ENCODE measurements at regions of chr4 and their contacts with region 1.

Region 1: GRCh38 chr4:40056716-40057585 is at the start of gene N4BP2:
- DNase-seq: peak; percentile 68
- ATAC-seq: peak; percentile 55
- H3K4me3 ChIP-seq: peak within 1 kb of the TSS; percentile 81
- H3K27ac ChIP-seq: peak within 1 kb of the TSS; percentile 88
- H3K4me1 ChIP-seq: peaks cover 17% of the 10 kb centered on the region
- H3K27me3 ChIP-seq: no peaks in the 10 kb centered on the region
- CTCF ChIP-seq: peak; percentile 52
- total RNA-seq, gene N4BP2: 3.4 and 3.9 TPM in 2 replicates

Region 2: GRCh38 chr4:39977489-39978377 is 79.2 kb before region 1 on chr4 and contains the start of gene PDS5A:
- CTCF ChIA-PET with region 1: no interaction called
- POLR2A ChIA-PET with region 1: no interaction called
- intact Hi-C with region 1: loop called (anchors 5 kb)
- DNase-seq: peak; percentile 91
- ATAC-seq: peak; percentile 78
- H3K4me3 ChIP-seq: peak within 1 kb of the TSS; percentile 96
- H3K27ac ChIP-seq: peak within 1 kb of the TSS; percentile 34
- H3K4me1 ChIP-seq: peaks cover 12% of the 10 kb centered on the region
- H3K27me3 ChIP-seq: no peaks in the 10 kb centered on the region
- CTCF ChIP-seq: peak; percentile 70
- total RNA-seq, gene PDS5A: 39.9 and 49.8 TPM in 2 replicates

Region 3: DNA sequence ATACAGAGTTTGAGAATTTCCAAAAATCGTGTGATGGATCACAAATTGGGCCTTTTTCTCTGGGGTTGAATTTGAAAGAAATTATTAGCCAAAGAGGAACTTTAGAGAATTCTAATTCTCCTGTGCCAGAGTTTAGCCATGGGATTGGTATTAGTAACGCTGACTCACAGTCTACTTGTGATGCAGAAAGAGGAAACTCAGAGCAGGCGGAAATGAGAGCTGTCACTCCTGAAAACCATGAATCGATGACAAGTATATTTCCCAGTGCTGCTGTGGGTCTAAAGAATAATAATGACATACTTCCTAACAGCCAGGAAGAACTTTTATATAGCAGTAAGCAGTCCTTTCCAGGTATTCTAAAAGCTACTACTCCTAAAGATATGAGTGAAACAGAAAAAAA is 64.6 kb after region 1 on chr4:
- CTCF ChIA-PET with region 1: no interaction called
- POLR2A ChIA-PET with region 1: no interaction called
- intact Hi-C with region 1: loop called (anchors 2 kb)
- DNase-seq: peak; percentile 79
- ATAC-seq: peak; percentile 99
- H3K4me3 ChIP-seq: no peak overlapping the region
- H3K27ac ChIP-seq: peak overlapping the region; percentile 62
- H3K4me1 ChIP-seq: peaks cover 23% of the 10 kb centered on the region
- H3K27me3 ChIP-seq: no peaks in the 10 kb centered on the region
- CTCF ChIP-seq: no peak

Region 4: DNA sequence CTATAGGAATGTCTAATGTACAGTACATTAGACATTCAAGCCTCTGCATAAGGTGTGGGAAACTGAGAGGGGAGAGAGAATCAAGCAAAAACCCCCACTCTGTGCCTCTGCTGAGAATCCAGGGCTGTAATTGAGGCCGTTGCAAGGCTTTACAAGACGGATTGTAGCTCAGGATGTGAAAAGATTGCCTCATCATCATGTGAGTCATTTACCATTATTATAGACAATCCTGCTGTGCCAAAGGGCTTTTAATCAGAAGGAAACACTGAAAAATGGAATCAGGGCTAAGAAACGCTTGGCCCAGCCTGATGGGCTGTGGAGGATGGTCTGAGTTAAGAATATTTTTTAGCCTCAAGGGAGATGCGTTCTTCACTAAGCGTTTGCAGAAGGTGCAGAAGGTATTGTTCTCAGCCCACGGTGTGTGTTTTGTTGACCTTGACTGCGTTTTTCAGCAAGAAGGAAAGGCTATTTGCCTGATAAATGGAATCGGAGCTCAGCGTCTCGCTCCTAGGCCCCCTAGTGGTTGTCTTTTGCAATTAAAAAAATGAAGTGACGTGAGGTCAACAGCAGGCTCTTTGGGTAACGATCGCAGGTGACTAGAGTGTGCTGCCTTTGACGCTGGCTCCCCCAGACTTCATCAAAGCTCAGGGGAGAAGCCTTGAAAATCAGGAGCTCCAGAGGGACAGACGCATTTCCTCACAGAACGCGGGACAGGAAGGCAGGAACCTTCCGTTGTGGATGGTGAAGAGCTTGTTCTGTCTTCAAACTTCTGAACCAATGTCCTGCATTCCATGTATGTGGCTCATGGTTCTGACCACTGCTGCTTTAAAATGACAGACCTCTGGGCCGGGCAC is 260.1 kb after region 1 on chr4:
- CTCF ChIA-PET with region 1: no interaction called
- POLR2A ChIA-PET with region 1: interaction called, 6 read pairs
- intact Hi-C with region 1: loop called (anchors 5 kb)
- DNase-seq: peak; percentile 82
- ATAC-seq: peak; percentile 81
- H3K4me3 ChIP-seq: peak overlapping the region; percentile 59
- H3K27ac ChIP-seq: peak overlapping the region; percentile 100
- H3K4me1 ChIP-seq: peaks cover 46% of the 10 kb centered on the region
- H3K27me3 ChIP-seq: no peaks in the 10 kb centered on the region
- CTCF ChIP-seq: peak; percentile 81

Measured in PC-3 (cell line).